ENCODE measurements at regions of chr3 and their contacts with region 1.

Region 1: GRCh38 chr3:171566803-171567422 is 106.7 kb upstream of the TNIK start:
- DNase-seq: no peak
- ATAC-seq: peak; percentile 48

Region 2: DNA sequence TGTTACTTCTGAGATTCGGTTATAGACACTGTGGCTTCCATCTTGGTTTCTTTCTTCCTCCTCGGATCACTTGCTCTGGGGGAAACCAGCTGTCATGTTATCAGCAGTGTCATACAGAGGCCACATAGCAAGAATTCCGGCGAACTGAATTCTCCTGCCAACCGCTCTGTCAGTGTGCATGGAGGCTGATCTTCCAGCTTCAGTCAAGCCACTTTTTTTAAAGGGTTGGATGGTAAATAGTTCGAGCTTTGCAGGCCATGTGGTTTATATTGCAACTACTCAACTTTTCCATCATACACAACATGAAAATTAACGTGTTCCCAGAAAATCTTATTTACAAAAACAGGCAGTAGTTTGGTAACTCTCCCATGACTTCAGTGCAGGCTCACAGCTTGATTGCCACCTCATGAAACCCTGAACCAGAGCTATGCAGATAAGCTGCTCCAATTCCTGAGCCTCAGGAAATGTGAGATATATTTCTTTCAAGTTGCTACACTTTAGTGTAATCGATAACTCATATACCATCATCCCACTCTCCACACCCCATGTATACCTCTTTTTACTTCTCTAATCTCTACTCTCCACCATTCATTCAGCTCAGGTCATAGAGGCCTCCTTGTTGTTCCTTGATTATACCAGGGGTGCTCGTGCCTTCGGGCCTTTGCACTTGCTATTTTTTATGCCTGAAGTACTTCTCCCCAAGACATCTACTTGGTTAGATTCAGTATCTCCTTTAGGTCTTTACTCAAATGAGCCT is 704.1 kb before region 1 on chr3:
- intact Hi-C with region 1: no loop called
- DNase-seq: no peak
- ATAC-seq: no peak

Region 3: GRCh38 chr3:170961616-170962400 is 605.1 kb before region 1 on chr3:
- intact Hi-C with region 1: loop called (anchors 5 kb)
- DNase-seq: no peak
- ATAC-seq: peak; percentile 29

Region 4: DNA sequence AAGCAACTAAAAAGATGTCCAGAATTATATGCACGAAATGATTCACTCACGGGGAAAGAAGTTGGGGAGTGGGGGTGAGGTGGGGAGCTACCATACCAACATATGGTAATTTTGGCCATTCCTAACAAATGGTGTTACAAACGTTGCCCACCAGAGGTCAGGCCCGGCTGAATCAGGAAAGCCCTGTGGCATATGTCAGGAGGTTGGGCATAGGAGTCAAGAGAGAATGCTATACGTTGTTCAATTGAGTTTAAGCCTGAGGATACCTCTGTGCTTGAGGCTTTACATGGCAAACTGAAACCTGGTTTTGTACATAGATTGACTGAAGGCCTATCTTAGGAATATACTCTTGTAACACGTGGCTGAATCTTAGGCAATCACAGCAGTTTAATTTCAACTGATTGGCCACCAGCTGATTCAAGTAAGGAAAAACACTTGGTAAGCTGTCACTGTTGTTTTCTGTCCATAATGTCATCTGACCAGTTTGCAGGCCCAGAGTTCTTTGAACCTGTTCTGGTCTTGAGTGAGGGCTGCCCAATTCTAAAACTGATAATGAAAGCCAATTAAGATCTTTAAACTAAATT is 517.0 kb before region 1 on chr3:
- intact Hi-C with region 1: loop called (anchors 5 kb)
- DNase-seq: peak; percentile 50
- ATAC-seq: peak; percentile 72

Region 5: DNA sequence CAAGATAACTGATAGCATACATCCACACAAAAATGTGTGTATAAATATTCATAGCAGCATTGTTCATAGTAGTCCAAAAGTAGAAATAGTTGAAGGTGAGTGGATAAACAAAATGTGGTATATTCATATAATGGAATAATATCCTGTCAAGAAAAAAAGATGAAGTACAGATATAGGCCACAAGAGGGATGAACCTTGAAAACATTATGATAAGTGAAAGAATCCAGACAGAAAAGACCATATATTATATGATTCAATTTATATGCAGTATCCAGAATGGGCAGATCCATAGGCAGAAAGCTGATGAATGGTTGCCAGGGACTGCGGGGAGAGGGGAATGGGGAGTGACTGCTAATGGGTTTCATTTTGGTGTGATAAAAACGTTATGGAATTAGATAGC is 52.4 kb before region 1 on chr3:
- intact Hi-C with region 1: no loop called
- DNase-seq: no peak
- ATAC-seq: no peak